ENCODE measurements at regions of chr1 and their contacts with region 1.

Region 1: GRCh38 chr1:168572633-168573032 is 3.8 kb upstream of the XCL1 start:
- DNase-seq: no peak
- ATAC-seq: no peak
- H3K4me3 ChIP-seq: no peak overlapping the region
- H3K27ac ChIP-seq: no peak overlapping the region
- H3K4me1 ChIP-seq: no peaks in the 10 kb centered on the region
- H3K27me3 ChIP-seq: no peaks in the 10 kb centered on the region
- CTCF ChIP-seq: no peak

Region 2: DNA sequence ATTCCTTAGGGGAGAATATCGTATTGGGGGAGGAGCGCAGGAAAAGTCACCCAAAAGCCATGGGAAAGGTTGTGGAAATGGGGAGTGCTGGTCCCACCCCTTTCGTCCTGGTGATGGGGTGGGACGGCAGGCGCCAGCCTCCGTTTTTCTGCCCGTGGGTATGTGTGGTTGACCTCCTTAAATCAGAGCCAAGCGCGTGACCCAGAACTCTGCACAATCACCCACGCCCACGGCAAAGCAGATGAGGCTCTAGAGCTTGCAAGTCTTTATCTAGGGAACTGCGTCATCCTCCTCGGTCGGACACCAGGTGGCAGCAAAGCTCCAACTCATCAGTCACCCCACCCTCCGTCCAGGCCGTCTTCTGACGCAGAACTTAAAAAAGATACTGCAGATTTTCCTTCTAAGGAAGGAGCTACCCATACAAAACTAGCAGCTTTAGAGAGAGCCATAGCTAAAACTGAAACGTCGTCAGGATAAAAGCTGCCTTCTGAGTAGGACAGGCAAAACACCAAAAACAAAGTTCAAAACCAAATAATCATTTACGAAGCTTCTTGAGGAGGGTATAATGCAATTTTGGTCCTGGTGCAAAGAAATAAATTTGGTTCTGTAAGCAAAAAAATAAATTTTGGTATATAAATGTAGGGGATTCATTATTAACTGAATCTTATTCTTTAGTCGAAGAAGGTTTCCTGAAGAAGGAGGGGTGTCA is 229.9 kb before region 1 on chr1:
- intact Hi-C with region 1: loop called (anchors 2 to 5 kb)
- DNase-seq: peak; percentile 87 to 90
- ATAC-seq: peak; percentile 96 to 100 (median 98)
- H3K4me3 ChIP-seq: peak overlapping the region; percentile 41
- H3K27ac ChIP-seq: no peak overlapping the region
- H3K4me1 ChIP-seq: peaks cover 5% of the 10 kb centered on the region
- H3K27me3 ChIP-seq: no peaks in the 10 kb centered on the region
- CTCF ChIP-seq: peak; percentile 85